Naive thymus-derived CD4-positive, alpha-beta T cell (primary cell): ENCODE measurements at regions of chr19 and their contacts with region 1.

Region 1: DNA sequence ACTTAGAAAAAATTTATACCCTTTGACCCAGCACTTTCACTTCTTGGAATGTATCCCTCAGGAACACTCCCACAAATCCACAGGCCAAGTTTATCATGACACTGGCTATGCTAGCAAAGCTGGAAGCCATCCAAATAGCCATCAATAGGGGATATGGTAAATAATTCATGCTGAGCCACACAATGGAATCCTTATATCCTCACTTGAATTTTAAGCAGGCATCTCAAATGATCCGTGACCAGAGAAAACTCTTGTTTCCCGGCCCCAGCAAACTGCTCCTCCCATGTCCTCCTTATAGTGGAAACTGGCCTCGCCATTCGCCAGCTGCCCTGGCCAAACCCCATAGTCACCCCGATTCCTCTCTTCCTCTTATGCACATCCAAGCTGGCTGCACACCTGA is 37.6 kb downstream of the GRIK5 start:
- DNase-seq: no peak
- ATAC-seq: no peak
- H3K4me3 ChIP-seq: no peak overlapping the region
- H3K4me3 Mint-ChIP-seq: no peak overlapping the region
- H3K27ac ChIP-seq: no peak overlapping the region
- H3K27ac Mint-ChIP-seq: peak overlapping the region in 1 of 9 donors; percentile 88
- H3K4me1 ChIP-seq: no peaks in the 10 kb centered on the region
- H3K4me1 Mint-ChIP-seq: peaks cover 0 to 8% (median 0%) of the 10 kb centered on the region in 7 donors
- H3K27me3 ChIP-seq: no peaks in the 10 kb centered on the region
- H3K27me3 Mint-ChIP-seq: peaks cover 0 to 11% (median 6%) of the 10 kb centered on the region in 5 donors

Region 2: GRCh38 chr19:42092350-42092749 is 59.9 kb after region 1 on chr19:
- CTCF ChIA-PET with region 1: no interaction called
- POLR2A ChIA-PET with region 1: no interaction called
- intact Hi-C with region 1: loop called in 1 of 2 experiments (anchors 10 kb)
- DNase-seq: peak in 5 of 9 donors; percentile 19 to 49 (median 32)
- ATAC-seq: peak; percentile 77
- H3K4me3 ChIP-seq: no peak overlapping the region
- H3K4me3 Mint-ChIP-seq: peak overlapping the region in 1 of 10 donors; percentile 59
- H3K27ac ChIP-seq: no peak overlapping the region
- H3K27ac Mint-ChIP-seq: peak overlapping the region in 3 of 9 donors; percentile 51 to 87 (median 75)
- H3K4me1 ChIP-seq: no peaks in the 10 kb centered on the region
- H3K4me1 Mint-ChIP-seq: peaks cover 12 to 37% (median 25%) of the 10 kb centered on the region in 7 donors
- H3K27me3 ChIP-seq: no peaks in the 10 kb centered on the region
- H3K27me3 Mint-ChIP-seq: no peaks in the 10 kb centered on the region